ENCODE measurements at regions of chr1 and their contacts with region 1.

Region 1: GRCh38 chr1:44029906-44030604 is 1.2 kb downstream of the SLC6A9 start:
- DNase-seq: peak in 1 of 2 experiments; percentile 92
- H3K4me3 ChIP-seq: peak overlapping the region; percentile 78 to 96 (median 86)
- H3K27ac ChIP-seq: peak overlapping the region; percentile 73; the same call in 1 of the 2 replicates
- H3K4me1 ChIP-seq: peaks cover 12 to 28% (median 18%) of the 10 kb centered on the region in 4 experiments
- H3K27me3 ChIP-seq: no peaks in the 10 kb centered on the region
- CTCF ChIP-seq: no peak
- EP300 ChIP-seq: peak in 1 of 2 experiments; percentile 3; a peak in 1 of 3 replicates
- POLR2A ChIP-seq: no peak; a peak in 1 of 3 replicates
- RAD21 ChIP-seq: no peak

Region 2: DNA sequence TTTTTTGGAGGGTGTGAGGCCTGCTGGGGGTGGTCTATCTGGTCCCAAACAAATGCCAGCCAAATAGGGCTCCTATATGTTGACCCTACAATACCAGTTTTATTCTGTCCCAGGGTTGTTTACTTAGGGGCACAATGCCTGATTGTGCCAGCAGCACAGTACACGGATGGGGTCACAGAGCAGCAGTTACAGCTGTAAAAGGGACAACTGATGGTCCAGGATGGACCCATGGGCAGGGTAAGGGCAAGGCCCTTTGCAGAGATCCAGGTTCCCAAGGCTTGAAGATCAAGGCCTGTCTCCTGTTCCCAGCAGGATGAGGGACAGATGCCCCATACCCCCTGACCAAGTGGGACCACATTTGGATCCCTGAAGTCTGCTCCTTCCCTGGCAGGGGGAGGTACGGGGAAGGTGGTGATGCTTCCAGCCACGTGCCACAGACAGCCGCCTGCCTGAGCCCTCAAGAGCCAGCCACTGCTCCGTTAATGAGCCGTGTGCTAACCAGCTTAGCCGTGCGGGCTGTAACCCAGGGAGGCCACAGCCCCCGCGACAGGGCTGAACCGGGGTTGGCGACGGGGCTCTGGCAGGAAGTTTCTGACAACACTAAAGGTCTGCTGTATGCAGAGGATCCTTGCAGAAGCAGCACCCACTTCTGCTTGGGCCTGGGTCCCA is 17.0 kb before region 1 on chr1:
- CTCF ChIA-PET with region 1: interaction called, 239 read pairs
- POLR2A ChIA-PET with region 1: interaction called, 544 read pairs
- DNase-seq: no peak
- H3K4me3 ChIP-seq: no peak overlapping the region
- H3K27ac ChIP-seq: no peak overlapping the region
- H3K4me1 ChIP-seq: peaks cover 0 to 8% (median 2%) of the 10 kb centered on the region in 4 experiments; a peak in 3 of 7 replicates
- H3K27me3 ChIP-seq: no peaks in the 10 kb centered on the region
- CTCF ChIP-seq: no peak
- EP300 ChIP-seq: no peak
- POLR2A ChIP-seq: no peak
- RAD21 ChIP-seq: no peak

Region 3: DNA sequence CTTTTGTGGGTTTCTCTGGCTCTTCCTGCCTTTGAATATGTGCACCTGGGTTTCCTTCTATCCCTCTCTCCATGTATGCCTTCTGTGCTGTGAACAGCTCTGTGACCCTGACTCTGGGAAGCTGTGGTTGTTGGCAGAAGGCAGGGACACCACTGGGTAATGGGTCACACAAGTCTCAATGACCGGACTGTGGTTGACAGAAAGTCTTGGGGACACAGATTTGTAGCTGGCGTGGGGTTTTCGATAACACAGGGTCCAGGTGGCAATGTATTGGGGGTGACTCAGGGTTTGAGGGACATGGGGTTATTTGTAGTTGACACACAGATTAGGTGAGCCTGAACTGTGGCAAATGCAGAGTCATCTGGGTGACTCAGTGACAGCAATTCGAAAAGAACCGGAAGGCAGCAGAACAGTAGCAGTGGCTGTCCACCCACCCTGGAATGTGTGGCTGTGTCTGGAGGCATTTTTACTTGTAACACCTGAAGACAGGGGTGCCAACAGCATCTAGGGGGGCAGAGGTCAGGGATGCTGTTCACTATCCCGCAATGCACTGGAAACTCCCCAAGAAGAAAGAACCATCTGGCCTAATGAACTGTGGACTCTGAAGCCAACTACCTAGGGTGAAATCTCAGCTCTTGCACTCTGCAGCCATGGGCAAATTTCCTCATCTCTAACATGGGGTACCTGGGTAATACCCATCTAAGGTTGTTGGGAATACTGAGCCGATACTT is 14.2 kb after region 1 on chr1:
- CTCF ChIA-PET with region 1: interaction called, 205 read pairs
- POLR2A ChIA-PET with region 1: interaction called, 18 read pairs
- DNase-seq: no peak
- H3K4me3 ChIP-seq: no peak overlapping the region
- H3K27ac ChIP-seq: no peak overlapping the region
- H3K4me1 ChIP-seq: peaks cover 0 to 3% (median 2%) of the 10 kb centered on the region in 4 experiments; a peak in 4 of 7 replicates
- H3K27me3 ChIP-seq: peaks cover 0 to 5% (median 0%) of the 10 kb centered on the region in 4 experiments; a peak in 3 of 7 replicates
- CTCF ChIP-seq: no peak
- EP300 ChIP-seq: no peak
- POLR2A ChIP-seq: no peak
- RAD21 ChIP-seq: no peak